Cardiac septum (tissue), 1 donor: ENCODE measurements at regions of chr6 and their contacts with region 1.

Region 1: GRCh38 chr6:28981833-28982475 is 23.2 kb downstream of the ZNF311 start:
- DNase-seq: peak; percentile 88

Region 2: GRCh38 chr6:28838634-28839442 is 143.1 kb before region 1 on chr6:
- intact Hi-C with region 1: loop called (anchors 10 kb)
- DNase-seq: peak; percentile 89

Region 3: DNA sequence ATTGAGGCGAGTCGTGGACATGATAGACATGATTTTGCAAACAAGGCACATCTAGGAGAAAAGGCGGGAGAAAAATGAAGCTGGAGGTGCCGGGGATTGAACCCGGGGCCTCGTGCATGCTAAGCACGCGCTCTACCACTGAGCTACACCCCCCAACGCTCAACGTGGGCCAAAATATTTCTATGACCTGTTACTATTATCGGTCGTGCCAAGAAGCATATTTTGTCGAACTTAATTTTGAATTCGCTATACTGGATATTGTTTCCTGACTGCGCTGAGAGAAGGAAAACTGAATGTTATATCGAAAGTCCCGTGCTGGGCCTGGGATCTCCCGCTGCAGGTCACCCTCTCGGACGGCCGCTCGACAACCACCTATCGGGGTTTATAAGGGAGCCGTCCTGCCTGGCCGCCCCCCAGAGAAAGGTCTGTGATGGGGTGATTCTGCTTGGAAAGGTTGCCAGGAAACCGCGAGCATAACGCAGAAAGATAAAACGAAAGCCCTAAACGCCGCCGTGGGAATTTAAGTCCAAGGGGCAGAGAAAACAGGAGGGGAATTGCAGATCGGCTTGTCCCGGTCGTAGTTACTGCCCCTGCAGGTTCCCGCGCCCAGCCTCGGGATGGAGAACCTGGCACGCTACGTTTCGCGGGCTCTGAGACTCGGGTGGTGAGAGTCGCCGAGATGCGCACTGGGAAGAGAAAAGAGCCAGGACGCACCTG is 118.2 kb before region 1 on chr6:
- intact Hi-C with region 1: loop called (anchors 10 kb)
- DNase-seq: no peak

Region 4: DNA sequence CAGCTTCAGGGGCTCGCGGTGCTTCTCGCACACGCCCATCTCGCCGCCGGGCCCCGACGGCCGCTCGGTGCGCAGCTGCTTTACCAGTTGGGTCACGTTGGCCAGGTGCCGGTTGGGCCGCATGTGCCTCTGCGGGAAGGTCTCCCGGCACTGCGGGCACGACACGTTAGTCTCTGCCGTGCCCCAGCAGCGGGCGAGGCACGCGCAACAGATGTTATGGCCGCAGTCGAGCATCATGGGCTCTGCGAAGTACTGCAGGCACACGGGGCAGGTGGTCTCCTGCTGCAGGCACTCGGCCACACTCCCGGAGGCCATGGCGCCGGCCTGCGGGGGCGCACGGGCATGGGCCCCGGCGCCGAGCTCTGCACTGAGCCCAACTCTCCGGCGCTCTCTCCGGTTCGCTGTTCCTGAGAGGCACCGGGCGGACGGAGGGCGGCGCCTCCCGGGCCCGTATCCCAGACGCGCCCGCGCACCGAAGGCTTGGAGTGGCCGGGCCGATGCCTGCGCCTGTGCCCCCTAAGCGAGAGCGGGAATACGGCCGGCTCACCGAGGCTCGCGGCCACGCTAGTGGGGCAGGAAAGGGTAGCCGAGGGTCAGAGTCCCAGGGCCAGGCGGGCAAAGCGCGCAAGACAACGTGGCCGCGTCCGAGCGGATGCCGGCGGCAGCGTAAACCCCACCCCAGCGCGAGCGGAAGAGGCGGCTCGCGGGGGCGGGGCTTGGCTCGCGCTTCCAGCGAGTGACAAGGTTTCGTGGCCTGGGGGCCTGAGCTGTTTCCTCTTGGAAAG is 58.4 kb before region 1 on chr6 and contains the start of gene TRIM27:
- intact Hi-C with region 1: loop called (anchors 10 kb)
- DNase-seq: peak; percentile 96
- total RNA-seq, gene TRIM27: 21.0 TPM

Region 5: DNA sequence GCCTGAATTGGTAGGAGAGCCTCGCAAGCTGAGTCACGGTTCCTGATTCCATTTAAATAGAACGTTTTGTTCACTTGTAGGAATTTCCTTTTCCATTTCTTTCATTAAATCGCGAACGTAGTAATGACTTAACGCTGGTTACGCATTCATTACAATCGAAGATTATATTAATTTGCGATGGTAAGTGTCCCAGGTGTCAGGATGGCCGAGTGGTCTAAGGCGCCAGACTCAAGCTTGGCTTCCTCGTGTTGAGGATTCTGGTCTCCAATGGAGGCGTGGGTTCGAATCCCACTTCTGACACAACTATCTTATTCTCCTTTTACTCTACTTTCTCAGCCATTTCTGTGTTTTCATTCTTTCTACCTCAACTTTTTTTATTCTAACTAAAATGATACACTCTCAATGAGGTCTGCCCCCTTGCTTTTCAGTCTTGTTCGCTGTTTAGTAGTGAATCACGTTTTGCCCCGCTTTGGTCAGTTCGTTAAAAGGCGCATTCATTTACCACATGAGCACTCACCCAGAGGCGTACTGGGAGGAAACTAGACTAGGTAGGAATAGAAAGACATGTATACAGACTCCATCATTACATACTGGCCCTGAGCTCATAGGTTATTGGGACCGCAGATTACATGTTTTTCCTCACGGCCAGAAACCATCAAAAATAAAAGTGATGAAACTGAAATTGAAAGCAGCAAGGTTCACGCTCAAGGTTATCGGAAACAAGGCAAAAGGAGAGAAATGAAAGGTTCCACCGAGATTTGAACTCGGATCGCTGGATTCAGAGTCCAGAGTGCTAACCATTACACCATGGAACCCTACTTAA is 40.9 kb before region 1 on chr6:
- intact Hi-C with region 1: loop called (anchors 1 kb)
- DNase-seq: peak; percentile 78